Heart right ventricle (tissue), 16 donors: ENCODE measurements at regions of chr1 and their contacts with region 1.

Region 1: GRCh38 chr1:34984793-34985608 is at the start of gene TMEM35B:
- DNase-seq: peak; percentile 79 to 80
- ATAC-seq: peak; percentile 89 to 95 (median 94)
- H3K4me3 ChIP-seq: peak within 1 kb of the TSS; percentile 62 to 92 (median 81)
- H3K27ac ChIP-seq: peak within 1 kb of the TSS; percentile 80 to 98 (median 96)
- H3K4me1 ChIP-seq: peaks cover 5 to 34% (median 27%) of the 10 kb centered on the region in 9 donors
- H3K27me3 ChIP-seq: no peaks in the 10 kb centered on the region
- CTCF ChIP-seq: peak in 2 of 9 donors; percentile 9 to 14
- total RNA-seq, gene TMEM35B: 4.9 to 13.1 (median 6.6) TPM

Region 2: DNA sequence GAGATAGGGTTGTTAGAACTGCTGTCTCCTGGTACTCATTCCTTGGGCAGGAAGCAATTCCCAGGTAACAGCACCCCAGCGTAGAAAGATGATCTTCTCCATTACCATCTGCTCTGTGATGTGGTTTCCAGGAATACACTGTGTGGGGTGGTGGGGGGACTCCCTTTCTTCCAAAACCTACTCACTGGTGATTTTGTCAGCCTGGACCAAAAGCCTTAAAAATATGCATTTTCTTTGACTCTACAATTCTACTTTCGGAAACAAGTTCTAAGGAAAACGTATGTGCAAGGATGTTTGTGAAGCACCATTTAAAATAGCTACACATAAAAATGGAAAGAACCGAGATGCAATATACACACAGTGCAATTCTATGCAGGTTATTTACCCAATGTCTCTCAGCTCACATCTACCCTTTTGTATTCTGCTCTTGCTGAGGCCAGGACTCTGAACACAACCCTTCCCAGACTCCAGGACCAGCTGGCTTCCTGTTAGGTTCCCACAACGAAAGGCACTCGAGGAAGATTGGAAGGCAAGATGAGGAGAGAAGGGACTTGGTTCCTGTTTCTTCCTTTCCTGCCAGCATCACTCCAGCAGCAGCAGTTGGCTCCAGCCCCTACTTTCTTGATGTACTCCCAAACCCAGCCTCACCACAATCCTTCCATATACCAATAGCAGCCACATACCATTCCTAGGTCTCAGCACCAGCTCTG is 263.2 kb before region 1 on chr1:
- intact Hi-C with region 1: no loop called
- DNase-seq: no peak
- ATAC-seq: no peak
- H3K4me3 ChIP-seq: no peak overlapping the region
- H3K27ac ChIP-seq: no peak overlapping the region
- H3K4me1 ChIP-seq: no peaks in the 10 kb centered on the region
- H3K27me3 ChIP-seq: peaks cover 0 to 42% (median 27%) of the 10 kb centered on the region in 7 donors
- CTCF ChIP-seq: no peak

Region 3: GRCh38 chr1:34852677-34853217 is 132.3 kb before region 1 on chr1:
- intact Hi-C with region 1: loop called in 1 of 10 experiments (anchors 10 kb)
- DNase-seq: peak; percentile 85 to 91
- ATAC-seq: peak; percentile 86 to 97 (median 94)
- H3K4me3 ChIP-seq: no peak overlapping the region
- H3K27ac ChIP-seq: peak overlapping the region in 9 of 10 donors; percentile 12 to 71 (median 42)
- H3K4me1 ChIP-seq: peaks cover 8 to 67% (median 39%) of the 10 kb centered on the region in 9 donors
- H3K27me3 ChIP-seq: no peaks in the 10 kb centered on the region
- CTCF ChIP-seq: peak; percentile 93 to 98 (median 96)

Region 4: DNA sequence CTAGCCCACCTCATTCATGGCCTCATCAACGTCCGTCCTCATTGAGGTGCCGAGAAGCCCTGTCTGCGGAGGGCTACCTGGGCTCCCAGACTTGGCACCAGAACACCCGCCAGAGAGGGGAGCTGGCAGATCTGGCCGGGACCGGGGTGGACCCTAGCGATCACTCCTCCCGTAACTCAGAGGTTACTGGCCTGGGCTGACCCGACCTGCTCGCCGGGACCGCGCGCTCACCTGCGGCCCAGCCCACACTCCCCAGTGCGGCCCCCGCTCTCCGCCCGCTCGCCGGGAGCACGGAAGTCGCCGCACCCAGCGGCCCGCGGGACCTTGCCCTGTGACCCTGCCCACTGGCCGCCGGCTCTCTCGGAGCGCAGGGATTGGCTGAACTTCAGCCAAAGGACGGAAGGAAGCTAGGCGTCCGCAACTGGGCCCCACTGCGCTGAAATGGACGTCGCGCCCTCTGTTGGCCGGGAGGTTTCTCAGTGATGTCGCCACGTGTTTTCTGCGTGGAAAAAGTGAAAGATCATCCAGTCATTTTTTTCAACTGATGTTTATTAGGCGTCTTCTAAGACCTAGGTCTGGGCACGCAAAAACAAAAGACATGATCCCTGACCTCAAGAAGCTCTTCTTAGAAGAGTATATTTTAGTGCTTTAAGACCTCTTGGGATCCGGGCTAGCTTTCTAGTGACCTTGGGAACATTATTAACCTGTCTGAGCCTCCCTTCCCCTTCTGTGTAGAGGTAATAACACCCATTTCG is 125.4 kb before region 1 on chr1 and contains the start of gene SMIM12:
- intact Hi-C with region 1: loop called in 4 of 10 experiments (anchors 10 kb)
- DNase-seq: peak; percentile 94 to 96
- ATAC-seq: peak; percentile 96 to 100 (median 98)
- H3K4me3 ChIP-seq: peak within 1 kb of the TSS; percentile 79 to 96 (median 91)
- H3K27ac ChIP-seq: peak within 1 kb of the TSS; percentile 77 to 96 (median 90)
- H3K4me1 ChIP-seq: peaks cover 8 to 37% (median 26%) of the 10 kb centered on the region in 9 donors
- H3K27me3 ChIP-seq: no peaks in the 10 kb centered on the region
- CTCF ChIP-seq: peak; percentile 80 to 95 (median 91)
- total RNA-seq, gene SMIM12: 33.9 to 74.2 (median 43.7) TPM

Region 5: GRCh38 chr1:34896613-34897012 is 88.4 kb before region 1 on chr1:
- intact Hi-C with region 1: no loop called
- DNase-seq: no peak
- ATAC-seq: no peak
- H3K4me3 ChIP-seq: no peak overlapping the region
- H3K27ac ChIP-seq: no peak overlapping the region
- H3K4me1 ChIP-seq: peaks cover 0 to 10% (median 0%) of the 10 kb centered on the region in 9 donors
- H3K27me3 ChIP-seq: peaks cover 0 to 14% (median 9%) of the 10 kb centered on the region in 7 donors
- CTCF ChIP-seq: no peak